AG04449 (cell line): ENCODE measurements at regions of chr12 and their contacts with region 1.

Region 1: GRCh38 chr12:1795785-1796514 is 24.4 kb upstream of the LRTM2 start:
- DNase-seq: no peak
- H3K4me3 ChIP-seq: peak overlapping the region; percentile 47
- CTCF ChIP-seq: peak; percentile 88

Region 2: DNA sequence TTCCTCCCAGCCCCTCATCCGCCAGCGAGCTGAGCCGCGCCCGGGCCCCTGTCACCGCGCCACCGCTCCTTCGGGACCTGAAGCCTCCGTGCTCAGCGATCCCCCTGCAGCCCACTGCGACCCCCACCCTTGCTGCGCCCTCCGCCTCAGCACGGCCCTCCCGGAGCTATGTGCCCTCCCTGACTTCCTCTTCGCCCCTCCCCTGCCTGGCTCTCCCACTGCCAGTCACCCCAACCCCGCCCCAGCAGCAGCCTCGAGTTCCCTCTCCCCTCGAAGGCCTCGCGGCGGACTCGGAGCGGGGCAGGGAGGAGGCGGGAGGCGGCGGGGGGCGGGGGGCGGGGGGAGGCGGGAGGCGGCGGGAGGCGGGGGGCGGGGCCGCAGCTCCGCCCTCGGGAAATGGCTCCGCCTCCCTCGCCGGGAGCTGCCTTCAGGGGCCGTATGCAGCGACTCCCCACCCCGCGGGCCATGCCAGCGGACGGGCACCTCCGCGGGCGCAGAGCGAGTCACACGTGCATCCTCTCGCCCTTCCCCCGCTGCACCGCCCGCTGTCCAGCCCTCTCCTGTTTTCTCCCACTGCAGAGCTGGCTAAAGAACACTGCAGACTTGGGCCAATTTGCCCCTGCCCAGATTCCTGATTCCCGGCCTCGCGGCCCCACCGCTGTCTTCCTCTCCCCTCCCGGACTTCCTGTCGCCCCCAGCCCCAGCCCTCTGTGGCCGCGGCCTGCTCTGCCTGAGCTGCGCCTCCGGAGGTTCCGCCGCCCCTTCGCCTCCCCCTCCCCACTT is 134.2 kb before region 1 on chr12:
- CTCF ChIA-PET with region 1: interaction called, 767 read pairs
- POLR2A ChIA-PET with region 1: no interaction called
- DNase-seq: peak; percentile 57
- H3K4me3 ChIP-seq: peak overlapping the region; percentile 53
- CTCF ChIP-seq: no peak

Region 3: DNA sequence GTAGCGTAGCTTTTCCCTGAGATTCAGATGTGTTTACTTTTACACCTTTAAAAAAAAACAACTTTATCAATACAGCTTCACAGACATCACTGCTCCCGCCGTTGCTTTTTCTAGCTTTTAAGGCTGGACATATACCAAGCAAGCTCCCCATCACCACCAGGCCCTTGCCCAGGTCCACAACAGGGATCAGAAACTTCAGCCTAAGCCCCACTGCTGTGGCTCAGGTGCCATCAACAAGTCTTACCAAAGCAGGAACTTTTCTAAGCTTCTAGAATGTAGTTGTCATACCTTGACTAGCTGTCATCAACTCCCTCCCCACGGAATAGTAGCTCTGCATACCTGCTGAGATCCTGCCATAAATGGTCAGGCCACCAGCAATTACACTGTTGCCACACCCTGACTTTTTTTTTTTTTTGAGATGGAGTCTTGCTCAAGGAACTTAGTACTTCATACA is 125.1 kb before region 1 on chr12:
- CTCF ChIA-PET with region 1: interaction called, 10 read pairs
- POLR2A ChIA-PET with region 1: no interaction called
- DNase-seq: no peak
- H3K4me3 ChIP-seq: no peak overlapping the region
- CTCF ChIP-seq: no peak

Region 4: DNA sequence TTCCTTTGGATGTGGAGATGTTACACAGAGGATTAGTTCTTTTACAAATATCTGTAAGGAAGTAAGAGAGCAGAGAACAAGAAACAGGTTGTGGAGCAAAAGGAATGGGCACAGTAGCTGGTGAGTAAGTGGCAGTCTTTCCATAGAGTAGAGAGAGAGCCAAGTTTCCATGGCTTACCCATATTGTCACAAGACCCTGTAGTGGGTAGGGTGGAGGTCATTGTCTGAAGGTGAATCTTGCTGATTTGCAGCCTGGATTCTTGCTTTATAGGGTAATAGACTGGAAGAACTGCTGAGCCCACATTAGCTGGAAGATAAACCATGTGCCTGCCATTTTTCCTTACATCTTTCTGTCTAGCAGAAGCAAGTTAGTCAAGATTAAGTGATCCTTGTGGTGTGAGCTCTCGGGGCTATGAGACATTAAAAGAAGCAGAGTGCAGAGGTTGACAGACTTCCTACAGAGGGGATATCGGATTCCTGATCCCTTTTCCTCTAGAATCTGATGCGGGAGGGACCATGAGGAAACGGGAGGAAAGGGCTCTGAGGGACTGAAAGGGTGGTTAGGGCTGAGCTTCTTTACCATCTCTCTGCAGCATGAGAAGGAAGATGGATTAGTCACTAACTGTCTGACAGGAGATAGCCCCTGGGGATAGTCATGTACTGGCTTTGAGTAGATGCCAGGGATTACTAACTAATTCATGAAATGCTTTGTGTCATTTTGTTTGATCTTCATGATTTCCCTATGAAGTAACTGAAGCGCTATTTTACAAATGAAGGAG is 19.6 kb before region 1 on chr12:
- CTCF ChIA-PET with region 1: interaction called, 44 read pairs
- POLR2A ChIA-PET with region 1: no interaction called
- DNase-seq: peak; percentile 12
- H3K4me3 ChIP-seq: no peak overlapping the region
- CTCF ChIP-seq: no peak

Region 5: GRCh38 chr12:1781772-1782171 is 14.2 kb before region 1 on chr12:
- CTCF ChIA-PET with region 1: interaction called, 44 read pairs
- POLR2A ChIA-PET with region 1: no interaction called
- DNase-seq: no peak
- H3K4me3 ChIP-seq: no peak overlapping the region
- CTCF ChIP-seq: no peak